H1 (cell line): ENCODE measurements at regions of chr18 and their contacts with region 1.

Region 1: DNA sequence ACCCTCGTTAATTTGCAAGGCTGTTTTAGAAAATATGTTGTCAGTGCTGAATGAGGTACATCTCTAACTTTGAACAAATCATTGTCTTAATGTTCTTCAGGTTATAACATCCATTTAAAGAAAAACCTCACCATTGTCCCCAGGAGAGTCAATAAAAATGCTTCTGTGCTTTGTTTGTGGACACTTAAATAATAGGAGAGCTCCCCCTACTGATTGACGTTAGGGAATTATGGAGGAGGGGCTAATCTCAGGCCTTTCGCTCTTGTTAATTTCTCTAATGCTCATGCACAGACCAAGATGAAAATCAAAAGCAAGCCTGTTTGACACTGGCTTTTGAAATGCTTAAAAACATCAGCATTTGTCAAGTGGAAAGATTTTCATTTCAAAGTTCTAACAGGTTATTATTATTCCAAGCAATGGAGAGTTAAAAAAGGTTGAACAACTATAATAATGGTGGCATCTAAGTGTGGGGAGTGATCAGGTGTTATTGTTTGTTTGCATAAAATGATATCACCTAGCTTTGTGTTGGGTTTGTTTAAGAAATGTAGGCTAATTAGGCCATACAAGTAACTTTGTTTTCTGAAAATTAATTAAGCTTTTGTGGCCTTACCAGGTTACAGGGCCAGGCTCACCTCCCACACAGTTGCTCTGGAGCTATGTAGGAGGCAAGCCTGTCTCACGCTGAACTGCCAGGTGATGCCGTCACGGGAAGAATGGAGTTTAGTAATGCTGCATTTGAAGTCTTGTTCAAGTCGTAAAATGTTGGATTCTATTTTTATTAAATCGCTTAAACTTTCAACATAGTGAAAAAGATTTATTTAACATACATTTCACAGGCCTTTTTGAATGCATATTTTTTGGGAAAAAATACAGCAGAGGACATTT is 51.7 kb upstream of the SMIM21 start:
- DNase-seq: no peak
- H3K4me3 ChIP-seq: no peak overlapping the region
- H3K27ac ChIP-seq: no peak overlapping the region
- H3K4me1 ChIP-seq: peaks cover 0 to 2% (median 0%) of the 10 kb centered on the region in 4 experiments; a peak in 2 of 7 replicates
- H3K27me3 ChIP-seq: no peaks in the 10 kb centered on the region
- CTCF ChIP-seq: peak in 2 of 3 experiments; percentile 32 to 44; a peak in 2 of 4 replicates
- EP300 ChIP-seq: no peak
- POLR2A ChIP-seq: no peak
- RAD21 ChIP-seq: peak; percentile 71 to 77

Region 2: GRCh38 chr18:75489493-75490190 is 10.4 kb after region 1 on chr18:
- CTCF ChIA-PET with region 1: interaction called, 12 read pairs
- POLR2A ChIA-PET with region 1: no interaction called
- DNase-seq: no peak
- H3K4me3 ChIP-seq: no peak overlapping the region
- H3K27ac ChIP-seq: no peak overlapping the region
- H3K4me1 ChIP-seq: no peaks in the 10 kb centered on the region
- H3K27me3 ChIP-seq: no peaks in the 10 kb centered on the region
- CTCF ChIP-seq: no peak
- EP300 ChIP-seq: no peak
- POLR2A ChIP-seq: no peak
- RAD21 ChIP-seq: no peak